HAP-1 (cell line): ENCODE measurements at regions of chr12 and their contacts with region 1.

Region 1: GRCh38 chr12:5988659-5989116 is 43.6 kb upstream of the ANO2 start:
- DNase-seq: peak; percentile 68 to 83
- H3K4me3 ChIP-seq: no peak overlapping the region
- H3K4me1 ChIP-seq: peaks cover 4% of the 10 kb centered on the region; the same call in 1 of the 2 replicates
- H3K27me3 ChIP-seq: peaks cover 3% of the 10 kb centered on the region; the same call in 1 of the 2 replicates

Region 2: GRCh38 chr12:5907807-5908206 is 80.9 kb before region 1 on chr12:
- in situ Hi-C with region 1: no loop called
- DNase-seq: no peak
- H3K4me3 ChIP-seq: no peak overlapping the region
- H3K4me1 ChIP-seq: no peaks in the 10 kb centered on the region
- H3K27me3 ChIP-seq: no peaks in the 10 kb centered on the region

Region 3: DNA sequence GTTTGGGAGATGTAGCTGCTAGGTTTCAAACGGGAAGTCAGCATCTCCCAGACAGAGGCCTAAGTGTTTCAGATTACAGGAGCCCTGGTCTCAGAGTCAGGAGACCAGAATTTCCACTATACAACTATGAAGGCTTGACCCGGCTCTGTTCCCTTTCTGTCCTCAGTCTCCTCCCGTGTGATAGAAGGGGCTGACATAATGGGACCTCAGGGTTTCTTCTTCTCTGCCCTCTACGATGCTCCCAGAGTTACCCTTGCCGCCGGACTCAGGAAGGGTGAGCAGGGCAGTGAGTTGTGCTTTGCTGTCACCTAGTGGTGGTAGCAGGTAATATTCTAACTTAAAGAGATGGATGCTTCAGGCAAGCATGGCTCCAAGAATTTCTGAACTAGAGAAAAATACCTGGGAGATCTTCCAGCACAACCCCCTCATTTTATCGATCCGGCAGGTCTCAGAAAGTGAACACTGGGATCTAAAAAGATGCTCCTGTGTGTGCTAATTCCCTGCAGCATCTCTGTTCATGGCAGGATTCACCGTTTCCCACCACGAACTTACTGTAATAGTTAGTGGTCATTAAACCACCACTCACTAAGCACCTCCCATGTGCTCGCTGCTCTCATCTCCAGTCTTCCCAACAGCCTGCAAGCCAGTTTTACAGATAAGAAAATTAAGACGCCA is 51.3 kb after region 1 on chr12:
- in situ Hi-C with region 1: loop called (anchors 5 kb)
- DNase-seq: peak; percentile 70 to 73
- H3K4me3 ChIP-seq: no peak overlapping the region
- H3K4me1 ChIP-seq: no peaks in the 10 kb centered on the region
- H3K27me3 ChIP-seq: no peaks in the 10 kb centered on the region